ENCODE measurements at regions of chr1 and their contacts with region 1.

Region 1: GRCh38 chr1:28792644-28793121 is 19.3 kb upstream of the OPRD1 start:
- DNase-seq: peak in 3 of 4 experiments; percentile 48 to 50 (median 50)
- ATAC-seq: peak; percentile 57
- H3K4me3 ChIP-seq: no peak overlapping the region
- H3K27ac ChIP-seq: no peak overlapping the region
- H3K4me1 ChIP-seq: peaks cover 11% of the 10 kb centered on the region in 2 experiments; a peak in 4 of 5 replicates
- H3K27me3 ChIP-seq: peaks cover 0 to 11% of the 10 kb centered on the region in 2 experiments; a peak in 2 of 5 replicates
- CTCF ChIP-seq: peak in 2 of 3 experiments; percentile 30 to 44; a peak in 3 of 6 replicates
- EP300 ChIP-seq: no peak
- POLR2A ChIP-seq: no peak
- RAD21 ChIP-seq: no peak

Region 2: GRCh38 chr1:28835237-28835650 is 42.6 kb after region 1 on chr1:
- CTCF ChIA-PET with region 1: no interaction called
- POLR2A ChIA-PET with region 1: no interaction called
- in situ Hi-C with region 1: no loop called
- intact Hi-C with region 1: loop called (anchors 5 kb)
- DNase-seq: no peak
- ATAC-seq: peak; percentile 21; the same call in 1 of the 3 replicates
- H3K4me3 ChIP-seq: no peak overlapping the region
- H3K27ac ChIP-seq: no peak overlapping the region
- H3K4me1 ChIP-seq: no peaks in the 10 kb centered on the region
- H3K27me3 ChIP-seq: peaks cover 29 to 54% of the 10 kb centered on the region in 2 experiments
- CTCF ChIP-seq: no peak
- EP300 ChIP-seq: no peak
- POLR2A ChIP-seq: no peak
- RAD21 ChIP-seq: no peak

Region 3: GRCh38 chr1:28845786-28846543 is 53.3 kb after region 1 on chr1:
- CTCF ChIA-PET with region 1: no interaction called
- POLR2A ChIA-PET with region 1: no interaction called
- in situ Hi-C with region 1: no loop called
- intact Hi-C with region 1: loop called (anchors 5 kb)
- DNase-seq: peak in 1 of 4 experiments; percentile 67
- ATAC-seq: peak; percentile 96
- H3K4me3 ChIP-seq: no peak overlapping the region
- H3K27ac ChIP-seq: no peak overlapping the region
- H3K4me1 ChIP-seq: no peaks in the 10 kb centered on the region
- H3K27me3 ChIP-seq: peaks cover 5 to 8% of the 10 kb centered on the region in 2 experiments; a peak in 3 of 5 replicates
- CTCF ChIP-seq: peak; percentile 53 to 64 (median 59)
- EP300 ChIP-seq: no peak
- POLR2A ChIP-seq: no peak
- RAD21 ChIP-seq: peak; percentile 42 to 71

Region 4: GRCh38 chr1:28865997-28866650 is 73.4 kb after region 1 on chr1:
- CTCF ChIA-PET with region 1: no interaction called
- POLR2A ChIA-PET with region 1: interaction called, 3 read pairs
- in situ Hi-C with region 1: loop called (anchors 5 kb)
- intact Hi-C with region 1: no loop called
- DNase-seq: no peak
- ATAC-seq: no peak; the same call in 2 of the 3 replicates
- H3K4me3 ChIP-seq: no peak overlapping the region
- H3K27ac ChIP-seq: no peak overlapping the region
- H3K4me1 ChIP-seq: peaks cover 0 to 11% of the 10 kb centered on the region in 2 experiments; a peak in 2 of 5 replicates
- H3K27me3 ChIP-seq: peaks cover 37 to 70% of the 10 kb centered on the region in 2 experiments
- CTCF ChIP-seq: no peak
- EP300 ChIP-seq: no peak
- POLR2A ChIP-seq: no peak
- RAD21 ChIP-seq: no peak

Region 5: GRCh38 chr1:28877132-28877781 is 84.6 kb after region 1 on chr1:
- CTCF ChIA-PET with region 1: interaction called, 51 read pairs
- POLR2A ChIA-PET with region 1: interaction called, 7 read pairs
- in situ Hi-C with region 1: no loop called
- intact Hi-C with region 1: no loop called
- DNase-seq: peak; percentile 81 to 92 (median 82)
- ATAC-seq: peak; percentile 85
- H3K4me3 ChIP-seq: no peak overlapping the region
- H3K27ac ChIP-seq: no peak overlapping the region
- H3K4me1 ChIP-seq: peaks cover 21 to 22% of the 10 kb centered on the region in 2 experiments
- H3K27me3 ChIP-seq: no peaks in the 10 kb centered on the region
- CTCF ChIP-seq: peak; percentile 94 to 99 (median 97)
- EP300 ChIP-seq: no peak
- POLR2A ChIP-seq: no peak
- RAD21 ChIP-seq: peak; percentile 95 to 98

Region 6: GRCh38 chr1:29062157-29062942 is 269.7 kb after region 1 on chr1:
- CTCF ChIA-PET with region 1: no interaction called
- POLR2A ChIA-PET with region 1: no interaction called
- in situ Hi-C with region 1: loop called (anchors 10 kb)
- intact Hi-C with region 1: no loop called
- DNase-seq: peak in 1 of 4 experiments; percentile 21
- ATAC-seq: no peak
- H3K4me3 ChIP-seq: no peak overlapping the region
- H3K27ac ChIP-seq: no peak overlapping the region
- H3K4me1 ChIP-seq: no peaks in the 10 kb centered on the region
- H3K27me3 ChIP-seq: no peaks in the 10 kb centered on the region
- CTCF ChIP-seq: no peak
- EP300 ChIP-seq: no peak
- POLR2A ChIP-seq: no peak
- RAD21 ChIP-seq: no peak

Measured in K562 (cell line).